Calu3 (cell line): ENCODE measurements at regions of chr12 and their contacts with region 1.

Region 1: GRCh38 chr12:98644711-98645402 is at the starts of genes APAF1 and IKBIP:
- DNase-seq: peak; percentile 99
- H3K4me3 Mint-ChIP-seq: peak within 1 kb of the TSS; percentile 97
- H3K27ac Mint-ChIP-seq: peak within 1 kb of the TSS; percentile 80
- H3K4me1 Mint-ChIP-seq: peaks cover 6% of the 10 kb centered on the region
- H3K27me3 Mint-ChIP-seq: no peaks in the 10 kb centered on the region
- CTCF ChIP-seq: no peak
- total RNA-seq, gene APAF1: 24.7 and 28.5 TPM in 2 replicates
- total RNA-seq, gene IKBIP: 21.7 and 24.7 TPM in 2 replicates

Region 2: GRCh38 chr12:98532681-98533304 is 112.1 kb before region 1 on chr12:
- CTCF ChIA-PET with region 1: no interaction called
- intact Hi-C with region 1: loop called (anchors 10 kb)
- DNase-seq: peak; percentile 66
- H3K4me3 Mint-ChIP-seq: no peak overlapping the region
- H3K27ac Mint-ChIP-seq: no peak overlapping the region
- H3K4me1 Mint-ChIP-seq: peaks cover 5% of the 10 kb centered on the region
- H3K27me3 Mint-ChIP-seq: no peaks in the 10 kb centered on the region
- CTCF ChIP-seq: peak; percentile 63

Region 3: DNA sequence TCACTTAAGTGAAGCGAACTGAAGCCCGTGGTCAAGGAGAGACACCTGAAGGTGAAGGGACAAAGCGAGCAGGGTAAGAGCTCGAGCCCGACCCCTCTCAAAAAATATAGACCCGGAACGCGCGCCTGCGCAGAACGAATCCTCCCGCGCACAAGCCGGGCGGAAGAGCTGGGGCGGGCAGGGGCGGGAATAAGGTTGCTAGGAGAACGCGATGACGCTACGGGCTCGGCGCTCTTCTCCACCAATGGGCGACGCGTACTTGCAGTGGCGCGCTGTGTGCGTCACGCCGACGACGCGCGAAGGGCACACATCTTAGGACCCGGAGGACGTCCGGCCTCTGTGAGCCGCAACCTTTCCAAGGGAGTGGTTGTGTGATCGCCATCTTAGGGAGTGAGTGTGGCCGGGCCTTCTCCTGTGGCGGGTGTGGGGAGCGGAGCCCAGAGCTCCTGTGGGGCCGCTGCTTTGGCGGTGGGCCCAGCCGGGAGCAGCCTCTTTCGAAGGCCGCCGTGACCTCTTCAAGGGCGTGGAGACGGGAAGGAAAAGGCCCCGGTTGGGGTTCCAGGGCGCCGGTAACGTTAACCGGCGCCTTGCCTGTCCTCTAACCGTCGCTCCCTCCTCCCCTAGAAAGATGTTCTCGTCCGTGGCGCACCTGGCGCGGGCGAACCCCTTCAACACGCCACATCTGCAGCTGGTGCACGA is 51.4 kb before region 1 on chr12 and contains the start of gene SLC25A3:
- CTCF ChIA-PET with region 1: interaction called, 3 read pairs
- intact Hi-C with region 1: loop called (anchors 1 kb)
- DNase-seq: peak; percentile 95
- H3K4me3 Mint-ChIP-seq: peak within 1 kb of the TSS; percentile 92
- H3K27ac Mint-ChIP-seq: peak within 1 kb of the TSS; percentile 99
- H3K4me1 Mint-ChIP-seq: peaks cover 18% of the 10 kb centered on the region
- H3K27me3 Mint-ChIP-seq: no peaks in the 10 kb centered on the region
- CTCF ChIP-seq: no peak
- total RNA-seq, gene SLC25A3: 486 and 520 TPM in 2 replicates